ENCODE measurements at regions of chr12 and their contacts with region 1.

Region 1: GRCh38 chr12:96399919-96400797 is at the start of gene CDK17:
- DNase-seq: peak; percentile 93
- ATAC-seq: peak; percentile 62
- H3K4me3 Mint-ChIP-seq: peak within 1 kb of the TSS; percentile 89
- H3K27ac Mint-ChIP-seq: peak within 1 kb of the TSS; percentile 98
- H3K4me1 Mint-ChIP-seq: peaks cover 35% of the 10 kb centered on the region
- H3K27me3 Mint-ChIP-seq: no peaks in the 10 kb centered on the region
- total RNA-seq, gene CDK17: 38.0 to 39.4 TPM

Region 2: DNA sequence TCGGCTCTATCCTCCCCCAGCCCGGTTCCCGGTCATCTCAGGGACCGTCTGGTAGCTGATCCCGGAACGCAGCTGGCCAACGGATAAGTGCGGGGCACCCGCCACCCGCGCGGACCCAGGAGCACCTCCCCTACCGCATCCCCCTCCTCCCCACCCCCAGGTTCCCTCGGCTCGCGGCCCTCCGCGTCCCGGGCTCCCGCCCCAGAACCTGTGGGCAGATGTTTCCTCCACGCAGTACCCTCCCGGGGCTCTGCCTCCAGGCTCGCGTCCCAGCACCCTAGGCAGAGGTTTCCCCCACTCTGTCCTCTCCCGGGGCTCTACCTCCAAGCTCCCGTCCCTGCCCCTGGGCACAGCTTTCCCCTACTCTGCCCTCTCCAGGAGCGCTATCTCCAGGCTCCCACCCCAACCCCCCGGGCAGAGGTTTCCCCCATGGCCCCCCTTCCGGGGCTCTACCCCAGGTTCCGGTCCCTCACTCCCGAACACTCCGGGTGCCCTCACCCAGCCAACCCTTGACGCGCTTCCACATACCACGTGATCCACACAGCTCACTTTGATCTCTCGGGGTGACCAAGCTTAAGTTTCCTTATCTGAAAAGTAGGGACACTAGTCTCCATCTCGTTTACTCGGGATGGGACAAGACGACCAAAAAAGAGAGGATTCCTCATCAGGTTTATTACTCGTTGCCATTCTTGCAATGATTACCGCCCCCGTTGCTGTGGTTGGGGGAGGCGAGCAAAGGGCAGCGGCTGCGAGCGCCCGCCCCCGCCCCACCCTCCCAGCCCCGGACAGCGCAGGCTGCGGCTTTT is 457.4 kb before region 1 on chr12 and contains the start of gene CCDC38:
- CTCF ChIA-PET with region 1: no interaction called
- POLR2A ChIA-PET with region 1: no interaction called
- intact Hi-C with region 1: loop called in 1 of 2 experiments (anchors 5 kb)
- DNase-seq: peak; percentile 91
- ATAC-seq: peak; percentile 98
- H3K4me3 Mint-ChIP-seq: peak within 1 kb of the TSS; percentile 84
- H3K27ac Mint-ChIP-seq: peak within 1 kb of the TSS; percentile 91
- H3K4me1 Mint-ChIP-seq: peaks cover 4% of the 10 kb centered on the region
- H3K27me3 Mint-ChIP-seq: no peaks in the 10 kb centered on the region
- total RNA-seq, gene CCDC38: 0.21 TPM in 1 of 2 experiments, not detected in the other

Region 3: DNA sequence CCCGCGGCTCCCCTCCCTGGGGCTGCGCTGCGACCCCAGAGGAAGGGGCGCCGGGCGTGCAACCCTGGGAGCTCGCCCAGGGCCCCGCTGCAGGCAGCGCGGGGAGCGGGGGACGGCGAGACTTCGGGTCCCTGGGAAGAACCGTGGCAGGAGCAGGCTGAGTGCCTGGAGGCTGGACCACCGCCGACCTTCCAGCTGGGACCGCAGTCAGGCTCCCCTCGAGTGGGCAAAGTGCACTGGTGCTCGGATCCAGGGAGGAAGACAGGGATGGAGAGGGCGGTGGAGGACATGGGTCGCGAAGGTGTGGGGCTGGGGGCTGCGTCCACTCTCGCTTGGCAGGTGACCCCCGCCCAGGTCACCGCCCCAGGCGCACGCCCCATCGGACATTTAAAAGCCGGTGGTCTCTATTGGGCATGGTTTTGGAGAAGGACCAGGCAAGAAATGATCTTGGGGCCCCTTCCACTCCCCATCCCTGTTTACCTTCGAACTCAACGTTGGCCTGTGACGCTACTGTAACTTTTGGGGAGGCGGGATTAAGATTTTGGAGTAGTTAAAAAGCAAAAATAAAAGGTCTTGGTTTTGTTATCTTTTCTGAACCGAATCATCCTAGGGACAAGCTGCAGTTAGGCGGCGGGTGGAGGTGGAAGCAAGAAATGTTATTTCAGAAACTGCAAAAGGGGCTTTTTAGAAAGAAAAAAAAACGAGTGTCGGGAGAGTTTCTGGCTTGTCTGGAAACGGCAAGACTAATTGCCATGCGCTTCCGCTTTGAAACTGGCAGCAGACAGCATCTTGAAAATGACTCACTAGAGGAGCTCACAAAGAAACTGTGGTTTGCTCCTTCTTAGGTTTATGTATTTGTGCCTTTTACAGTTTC is 204.9 kb before region 1 on chr12:
- CTCF ChIA-PET with region 1: interaction called, 8 read pairs
- POLR2A ChIA-PET with region 1: no interaction called
- intact Hi-C with region 1: loop called (anchors 1 kb)
- DNase-seq: peak; percentile 86
- ATAC-seq: peak; percentile 73
- H3K4me3 Mint-ChIP-seq: peak overlapping the region; percentile 97
- H3K27ac Mint-ChIP-seq: peak overlapping the region; percentile 100
- H3K4me1 Mint-ChIP-seq: peaks cover 61% of the 10 kb centered on the region
- H3K27me3 Mint-ChIP-seq: no peaks in the 10 kb centered on the region

Region 4: DNA sequence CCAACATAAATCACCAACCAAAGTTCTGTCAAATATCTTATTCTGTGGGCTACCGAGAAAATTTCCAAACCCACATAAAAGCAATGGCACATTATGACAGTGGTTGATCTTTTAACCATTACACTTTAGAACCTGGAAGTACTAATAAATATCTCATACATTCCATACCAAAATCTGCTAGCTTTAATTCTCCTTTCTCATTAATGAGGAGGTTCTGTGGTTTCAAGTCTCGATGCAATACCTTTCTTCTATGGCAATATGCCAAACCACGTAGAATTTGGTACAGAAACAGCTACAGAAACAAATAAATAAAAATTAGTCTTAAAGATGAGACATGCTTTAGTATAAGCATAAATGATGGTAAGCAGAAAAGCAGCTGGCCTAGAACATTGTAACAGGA is 105.3 kb before region 1 on chr12:
- CTCF ChIA-PET with region 1: interaction called, 7 read pairs
- POLR2A ChIA-PET with region 1: no interaction called
- intact Hi-C with region 1: loop called in 1 of 2 experiments (anchors 5 kb)
- DNase-seq: no peak
- ATAC-seq: no peak
- H3K4me3 Mint-ChIP-seq: no peak overlapping the region
- H3K27ac Mint-ChIP-seq: no peak overlapping the region
- H3K4me1 Mint-ChIP-seq: peaks cover 25% of the 10 kb centered on the region
- H3K27me3 Mint-ChIP-seq: no peaks in the 10 kb centered on the region

Region 5: DNA sequence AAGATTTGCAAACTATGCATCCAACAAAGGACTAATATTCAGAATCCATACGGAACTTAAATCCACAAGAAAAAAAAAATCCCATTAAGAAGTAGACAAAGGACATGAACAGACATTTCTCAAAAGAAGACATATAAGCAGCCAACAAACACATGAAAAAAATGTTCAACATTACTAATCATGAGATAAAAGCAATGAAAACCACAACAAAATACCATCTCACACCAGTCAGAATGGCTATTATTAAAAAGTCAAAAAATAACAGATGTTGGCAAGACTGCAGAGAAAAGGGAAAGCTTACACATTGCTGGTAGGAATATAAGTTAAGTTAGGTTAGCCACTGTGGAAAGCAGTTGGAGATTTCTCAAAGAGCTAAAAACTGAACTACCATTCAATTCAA is 16.2 kb before region 1 on chr12:
- CTCF ChIA-PET with region 1: interaction called, 29 read pairs
- POLR2A ChIA-PET with region 1: interaction called, 7 read pairs
- intact Hi-C with region 1: loop called in 1 of 2 experiments (anchors 1 kb)
- DNase-seq: no peak
- ATAC-seq: no peak
- H3K4me3 Mint-ChIP-seq: no peak overlapping the region
- H3K27ac Mint-ChIP-seq: no peak overlapping the region
- H3K4me1 Mint-ChIP-seq: peaks cover 76% of the 10 kb centered on the region
- H3K27me3 Mint-ChIP-seq: no peaks in the 10 kb centered on the region

Region 6: DNA sequence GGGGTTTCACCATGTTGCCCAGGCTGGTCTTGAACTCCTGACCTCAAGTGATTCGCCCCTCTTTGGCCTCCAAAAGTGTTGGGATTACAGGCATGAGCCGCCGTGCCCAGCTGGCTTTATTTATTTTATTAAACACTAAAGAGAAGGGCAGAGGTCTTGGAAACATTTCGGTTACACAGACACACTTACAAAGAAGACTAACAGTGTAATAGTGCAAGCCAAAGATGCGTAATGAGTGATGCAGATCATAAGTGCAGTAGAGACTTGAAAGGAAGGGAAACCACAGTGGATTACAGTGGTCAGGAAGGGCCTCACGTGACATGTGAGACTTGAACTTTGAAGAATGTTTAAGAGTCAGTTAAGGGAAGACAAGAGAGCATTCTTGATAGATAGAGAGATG is 33.9 kb after region 1 on chr12:
- CTCF ChIA-PET with region 1: interaction called, 6 read pairs
- POLR2A ChIA-PET with region 1: interaction called, 7 read pairs
- intact Hi-C with region 1: loop called (anchors 1 to 2 kb)
- DNase-seq: peak; percentile 85
- ATAC-seq: peak; percentile 99
- H3K4me3 Mint-ChIP-seq: peak overlapping the region; percentile 17
- H3K27ac Mint-ChIP-seq: peak overlapping the region; percentile 83
- H3K4me1 Mint-ChIP-seq: peaks cover 26% of the 10 kb centered on the region
- H3K27me3 Mint-ChIP-seq: no peaks in the 10 kb centered on the region

Region 7: GRCh38 chr12:96501139-96501761 is 101.1 kb after region 1 on chr12:
- CTCF ChIA-PET with region 1: no interaction called
- POLR2A ChIA-PET with region 1: no interaction called
- intact Hi-C with region 1: loop called in 1 of 2 experiments (anchors 5 kb)
- DNase-seq: peak; percentile 47
- ATAC-seq: peak; percentile 76
- H3K4me3 Mint-ChIP-seq: no peak overlapping the region
- H3K27ac Mint-ChIP-seq: peak overlapping the region; percentile 79
- H3K4me1 Mint-ChIP-seq: peaks cover 32% of the 10 kb centered on the region
- H3K27me3 Mint-ChIP-seq: no peaks in the 10 kb centered on the region

Region 8: DNA sequence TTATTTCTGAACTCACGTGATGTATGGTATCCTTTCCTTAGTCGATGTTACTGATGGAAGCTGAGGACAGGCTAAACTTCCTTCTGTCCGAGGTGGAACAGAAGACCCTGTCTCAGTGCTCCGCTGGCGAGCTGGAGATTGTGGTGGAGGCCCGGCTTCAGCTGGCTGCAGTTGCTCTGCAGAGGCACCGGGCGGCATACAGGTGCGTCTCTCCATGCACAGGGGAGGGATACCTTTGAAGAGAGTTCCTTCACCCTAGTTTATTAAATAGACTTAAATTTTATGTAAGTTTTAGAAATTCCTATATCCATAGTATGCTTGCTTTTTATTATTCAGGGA is 320.2 kb after region 1 on chr12:
- CTCF ChIA-PET with region 1: no interaction called
- POLR2A ChIA-PET with region 1: no interaction called
- intact Hi-C with region 1: no loop called
- DNase-seq: peak; percentile 55
- ATAC-seq: peak; percentile 75
- H3K4me3 Mint-ChIP-seq: peak overlapping the region; percentile 75
- H3K27ac Mint-ChIP-seq: peak overlapping the region; percentile 91
- H3K4me1 Mint-ChIP-seq: peaks cover 9% of the 10 kb centered on the region
- H3K27me3 Mint-ChIP-seq: no peaks in the 10 kb centered on the region

Measured in activated CD4-positive, alpha-beta T cell treated with anti-CD3 and anti-CD28 coated beads for 36 hours (primary cell).